Activated T-helper 1 cell treated with anti-CD3 and anti-CD28 coated beads, Interleukin-12 subunit alpha, Interleukin-12 subunit beta, Interleukin-2, Interleukin-4 antibody, amounts not matched to agents 30 ng/mL and 10 ng/mL and 1 ng/mL, durations not matched to agents 14 hours and 24 hours and 36 hours (primary cell): ENCODE measurements at regions of chr6 and their contacts with region 1.

Region 1: DNA sequence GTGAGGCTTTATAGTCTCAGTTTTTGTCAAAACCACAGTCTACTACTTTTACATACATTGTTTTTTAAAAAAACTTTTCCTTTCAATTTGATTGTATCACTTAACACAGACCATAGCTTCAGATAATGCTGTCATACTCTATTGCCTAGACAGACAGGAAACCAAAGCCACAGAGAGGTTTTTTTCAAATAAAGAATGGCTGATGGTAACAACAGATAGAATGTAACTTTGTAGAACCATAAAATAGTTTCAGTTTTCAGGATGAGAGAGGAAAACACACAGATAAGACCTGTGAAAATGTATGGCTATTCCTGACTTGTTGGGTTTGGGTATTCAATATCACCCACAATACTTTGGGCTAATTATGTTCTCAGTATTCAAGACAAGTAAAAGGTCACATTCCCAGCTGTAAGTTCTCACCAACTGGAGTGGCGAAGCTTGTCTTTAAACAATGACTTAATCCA is 94.0 kb downstream of the ADGRG6 start:
- DNase-seq: peak; percentile 12
- H3K4me3 Mint-ChIP-seq: no peak overlapping the region
- H3K27ac Mint-ChIP-seq: peak overlapping the region; percentile 10
- H3K4me1 Mint-ChIP-seq: peaks cover 15% of the 10 kb centered on the region
- H3K27me3 Mint-ChIP-seq: peaks cover 56% of the 10 kb centered on the region

Region 2: DNA sequence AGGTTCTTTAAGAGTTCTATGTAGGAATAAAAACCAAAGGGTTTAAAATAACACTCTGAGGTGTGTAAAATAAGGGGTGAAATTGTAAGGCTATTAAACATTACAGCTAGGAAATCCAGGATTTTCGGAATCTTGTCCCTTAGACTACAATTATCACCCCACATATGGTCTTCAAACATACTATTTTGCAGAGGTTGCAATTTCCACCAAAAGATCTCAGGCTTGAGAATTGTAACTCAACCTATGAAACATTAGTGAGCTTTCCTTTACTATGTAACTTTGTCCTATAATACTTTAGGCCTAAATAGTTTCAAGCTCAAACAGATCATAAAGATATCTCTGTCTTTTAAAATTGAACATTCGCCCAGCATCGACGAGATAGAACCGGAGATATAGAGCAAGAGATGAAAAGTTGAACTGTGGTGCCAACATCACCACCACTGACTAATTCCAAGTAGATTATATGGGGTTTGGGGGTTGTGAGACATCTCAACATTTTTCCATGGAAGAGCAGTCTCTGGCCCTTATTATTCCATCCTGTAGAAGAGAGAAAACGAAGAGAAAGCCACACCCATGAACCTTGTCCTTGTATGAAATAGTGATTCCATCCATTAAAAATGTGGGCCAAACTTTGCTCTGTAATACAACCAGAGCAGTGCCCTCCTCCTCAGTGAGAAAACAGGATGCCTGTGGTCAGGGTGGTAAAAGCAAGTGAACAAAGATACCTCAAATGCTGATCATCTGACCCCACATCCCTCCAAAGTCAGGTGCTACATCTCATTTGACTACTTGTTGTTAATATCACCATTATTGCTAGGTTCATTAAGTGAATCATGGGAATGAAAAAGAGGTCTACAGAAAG is 547.5 kb before region 1 on chr6:
- intact Hi-C with region 1: no loop called
- DNase-seq: no peak
- H3K4me3 Mint-ChIP-seq: no peak overlapping the region
- H3K27ac Mint-ChIP-seq: no peak overlapping the region
- H3K4me1 Mint-ChIP-seq: no peaks in the 10 kb centered on the region
- H3K27me3 Mint-ChIP-seq: no peaks in the 10 kb centered on the region

Region 3: DNA sequence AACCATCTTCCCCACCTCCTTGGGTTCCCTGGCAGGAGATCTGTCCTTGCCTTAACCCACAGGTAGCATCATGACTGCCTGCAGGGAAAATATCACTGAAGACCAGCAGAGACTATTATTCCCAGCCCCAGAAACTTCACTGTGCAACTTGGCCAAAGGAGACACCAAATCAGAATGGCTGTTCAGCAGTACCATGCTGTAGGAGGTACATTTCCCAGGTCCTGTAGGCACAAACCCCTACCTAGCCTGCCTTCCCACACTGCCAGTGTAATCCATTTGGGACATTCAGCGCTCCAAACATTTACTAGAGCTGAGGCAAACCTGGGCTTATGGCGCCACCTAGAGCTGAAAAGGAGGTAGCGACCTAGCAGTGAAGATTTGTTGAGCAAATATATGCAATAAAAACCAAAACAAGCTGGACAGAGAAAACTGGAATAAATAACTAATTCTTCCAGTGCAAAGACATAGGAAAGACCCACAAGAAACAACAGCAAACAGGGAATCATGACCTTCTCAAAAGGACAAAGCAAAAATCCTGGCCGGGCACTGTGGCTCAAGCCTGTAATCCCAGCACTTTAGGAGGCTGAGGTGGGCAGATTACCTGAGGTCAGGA is 188.4 kb before region 1 on chr6:
- intact Hi-C with region 1: loop called (anchors 5 kb)
- DNase-seq: peak; percentile 6
- H3K4me3 Mint-ChIP-seq: no peak overlapping the region
- H3K27ac Mint-ChIP-seq: no peak overlapping the region
- H3K4me1 Mint-ChIP-seq: no peaks in the 10 kb centered on the region
- H3K27me3 Mint-ChIP-seq: no peaks in the 10 kb centered on the region

Region 4: DNA sequence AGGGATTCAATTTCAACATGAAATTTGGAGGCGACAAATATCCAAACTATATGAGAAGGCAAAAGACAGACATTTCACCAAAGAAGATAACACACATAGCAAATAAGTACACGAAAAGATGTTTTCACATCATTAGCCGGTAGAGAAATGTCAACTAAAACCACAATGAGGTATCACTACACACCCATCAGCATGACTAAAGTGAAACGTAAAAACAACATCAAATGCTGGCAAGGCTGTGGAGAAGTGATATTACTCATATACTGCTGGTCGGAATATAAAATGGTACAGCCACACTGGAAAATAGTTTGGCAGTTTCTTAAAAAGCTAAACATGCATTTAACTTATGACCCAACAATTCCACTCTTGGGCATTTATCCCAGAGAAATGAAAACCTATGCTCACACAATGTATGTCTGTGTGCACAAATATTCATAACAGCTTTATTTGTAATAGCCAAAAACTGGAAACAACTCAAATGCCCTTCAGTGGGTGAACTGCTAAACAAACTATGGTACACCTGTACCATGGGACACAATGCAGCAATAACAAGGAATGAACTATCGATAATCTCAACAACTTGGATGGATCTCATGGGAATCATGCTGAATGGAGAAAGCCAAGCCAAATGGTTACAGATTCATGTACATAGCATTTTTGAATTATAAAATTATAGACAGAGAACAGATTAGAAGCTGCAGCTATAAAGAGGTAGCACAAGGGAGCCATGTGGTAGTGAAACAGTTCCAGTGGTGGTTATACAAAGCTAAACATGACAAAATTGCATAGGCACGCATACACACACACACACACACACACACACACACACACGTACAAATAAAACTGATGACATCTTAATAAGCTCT is 1046.1 kb after region 1 on chr6:
- intact Hi-C with region 1: loop called (anchors 5 kb)
- DNase-seq: peak; percentile 13
- H3K4me3 Mint-ChIP-seq: peak overlapping the region; percentile 53
- H3K27ac Mint-ChIP-seq: peak overlapping the region; percentile 91
- H3K4me1 Mint-ChIP-seq: peaks cover 61% of the 10 kb centered on the region
- H3K27me3 Mint-ChIP-seq: no peaks in the 10 kb centered on the region

Region 5: DNA sequence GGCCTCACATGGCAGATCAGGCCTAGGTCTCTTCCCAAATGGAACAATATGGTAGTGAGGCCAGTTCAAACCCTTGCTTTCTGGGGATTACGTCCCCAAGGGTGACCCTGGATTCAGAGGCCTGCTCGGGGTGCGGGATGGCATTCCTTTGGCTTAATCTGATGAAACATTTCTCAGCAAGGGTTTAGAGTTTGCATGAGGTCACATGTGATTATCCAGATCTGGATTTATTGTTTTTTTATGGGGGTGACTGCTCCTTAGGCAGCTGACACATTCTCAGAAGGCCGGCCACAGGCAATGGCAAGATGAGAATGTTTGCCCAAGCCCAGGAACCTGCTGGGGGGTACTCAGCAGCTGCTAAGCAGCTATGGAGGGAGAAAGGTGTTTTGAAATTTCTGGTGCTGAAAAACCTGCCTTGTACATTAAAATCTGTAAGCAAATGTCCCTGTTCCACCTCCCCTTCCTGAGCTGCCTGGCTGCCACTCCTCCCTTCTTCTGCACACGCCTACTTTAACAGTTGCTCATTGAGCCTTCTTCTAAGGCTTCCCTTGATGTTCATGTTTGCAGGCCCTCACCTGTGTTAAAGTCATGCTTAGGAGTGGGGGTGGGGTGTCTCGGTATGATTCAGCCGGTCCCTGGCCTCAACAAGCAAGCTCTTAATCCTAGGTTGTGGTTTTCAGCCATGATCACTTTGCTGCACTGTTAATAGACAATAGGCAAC is 1153.6 kb after region 1 on chr6:
- intact Hi-C with region 1: loop called (anchors 5 kb)
- DNase-seq: no peak
- H3K4me3 Mint-ChIP-seq: peak overlapping the region; percentile 40
- H3K27ac Mint-ChIP-seq: peak overlapping the region; percentile 74
- H3K4me1 Mint-ChIP-seq: peaks cover 88% of the 10 kb centered on the region
- H3K27me3 Mint-ChIP-seq: no peaks in the 10 kb centered on the region

Region 6: GRCh38 chr6:144055121-144055931 is 1659.5 kb after region 1 on chr6:
- intact Hi-C with region 1: loop called (anchors 5 kb)
- DNase-seq: peak; percentile 37
- H3K4me3 Mint-ChIP-seq: peak overlapping the region; percentile 83
- H3K27ac Mint-ChIP-seq: peak overlapping the region; percentile 98
- H3K4me1 Mint-ChIP-seq: peaks cover 48% of the 10 kb centered on the region
- H3K27me3 Mint-ChIP-seq: no peaks in the 10 kb centered on the region